H1 (cell line): ENCODE measurements at regions of chr17 and their contacts with region 1.

Region 1: DNA sequence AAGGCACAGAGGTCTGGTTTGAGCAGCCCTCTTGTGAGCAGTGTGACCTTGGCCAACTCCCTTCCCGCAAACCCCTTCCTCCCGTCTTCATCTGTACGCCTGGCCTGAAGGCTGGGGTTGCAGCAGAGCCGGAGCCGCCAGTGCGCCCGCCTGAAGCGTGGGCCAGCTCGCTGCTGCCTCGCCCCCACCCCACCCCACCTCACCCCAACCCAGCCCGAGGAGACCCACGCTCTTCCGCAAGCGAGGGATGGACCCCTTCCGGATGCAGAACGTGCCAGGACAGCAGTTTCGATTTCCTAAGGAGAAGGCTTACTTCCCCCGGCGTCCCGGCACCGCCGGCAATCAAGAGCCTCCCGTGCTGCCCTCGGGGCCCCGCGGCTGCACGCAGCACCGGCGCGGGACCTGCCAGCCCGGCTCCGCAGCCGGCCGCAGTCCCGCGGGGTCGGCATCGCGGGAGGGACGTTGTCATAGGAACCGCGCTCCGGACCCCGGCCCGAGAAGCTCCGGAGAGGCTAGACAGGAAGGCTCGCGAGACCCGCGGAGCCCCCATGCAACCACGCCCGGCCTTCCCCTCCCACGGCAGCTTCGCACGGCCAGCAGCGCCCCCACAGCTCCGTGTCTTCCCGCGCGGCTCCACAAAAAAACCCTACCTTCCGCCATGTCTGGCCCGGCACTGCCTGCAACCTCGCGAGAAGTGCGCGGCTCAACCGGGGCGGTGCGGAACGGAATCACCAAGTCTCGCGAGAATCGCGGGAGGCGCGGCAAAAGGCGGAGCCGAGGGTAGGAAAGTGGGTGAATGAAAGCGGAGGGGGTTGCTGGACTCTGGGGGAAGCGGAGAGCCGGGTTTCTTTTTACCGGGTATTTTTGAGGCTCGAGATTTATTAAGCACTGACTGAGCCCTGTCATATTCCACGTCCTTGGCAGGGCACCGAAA is at the start of gene ANKFY1:
- DNase-seq: peak; percentile 79 to 99
- H3K4me3 ChIP-seq: peak within 1 kb of the TSS; percentile 65 to 99 (median 82)
- H3K27ac ChIP-seq: peak within 1 kb of the TSS; percentile 92
- H3K4me1 ChIP-seq: peaks cover 0 to 14% (median 5%) of the 10 kb centered on the region in 4 experiments
- H3K27me3 ChIP-seq: no peaks in the 10 kb centered on the region
- CTCF ChIP-seq: no peak
- EP300 ChIP-seq: no peak
- POLR2A ChIP-seq: peak; percentile 65 to 91
- RAD21 ChIP-seq: no peak
- total RNA-seq, gene ANKFY1: 44.9 and 45.3 TPM in 2 replicates

Region 2: GRCh38 chr17:4249452-4250029 is 14.0 kb before region 1 on chr17:
- CTCF ChIA-PET with region 1: interaction called, 89 read pairs
- POLR2A ChIA-PET with region 1: interaction called, 12 read pairs
- DNase-seq: no peak
- H3K4me3 ChIP-seq: no peak overlapping the region
- H3K27ac ChIP-seq: no peak overlapping the region
- H3K4me1 ChIP-seq: peaks cover 0 to 15% (median 10%) of the 10 kb centered on the region in 4 experiments; a peak in 5 of 7 replicates
- H3K27me3 ChIP-seq: no peaks in the 10 kb centered on the region
- CTCF ChIP-seq: peak in 2 of 3 experiments; percentile 52 to 59; a peak in 3 of 4 replicates
- EP300 ChIP-seq: no peak
- POLR2A ChIP-seq: no peak
- RAD21 ChIP-seq: peak; percentile 8 to 31; a peak in 1 of 4 replicates

Region 3: DNA sequence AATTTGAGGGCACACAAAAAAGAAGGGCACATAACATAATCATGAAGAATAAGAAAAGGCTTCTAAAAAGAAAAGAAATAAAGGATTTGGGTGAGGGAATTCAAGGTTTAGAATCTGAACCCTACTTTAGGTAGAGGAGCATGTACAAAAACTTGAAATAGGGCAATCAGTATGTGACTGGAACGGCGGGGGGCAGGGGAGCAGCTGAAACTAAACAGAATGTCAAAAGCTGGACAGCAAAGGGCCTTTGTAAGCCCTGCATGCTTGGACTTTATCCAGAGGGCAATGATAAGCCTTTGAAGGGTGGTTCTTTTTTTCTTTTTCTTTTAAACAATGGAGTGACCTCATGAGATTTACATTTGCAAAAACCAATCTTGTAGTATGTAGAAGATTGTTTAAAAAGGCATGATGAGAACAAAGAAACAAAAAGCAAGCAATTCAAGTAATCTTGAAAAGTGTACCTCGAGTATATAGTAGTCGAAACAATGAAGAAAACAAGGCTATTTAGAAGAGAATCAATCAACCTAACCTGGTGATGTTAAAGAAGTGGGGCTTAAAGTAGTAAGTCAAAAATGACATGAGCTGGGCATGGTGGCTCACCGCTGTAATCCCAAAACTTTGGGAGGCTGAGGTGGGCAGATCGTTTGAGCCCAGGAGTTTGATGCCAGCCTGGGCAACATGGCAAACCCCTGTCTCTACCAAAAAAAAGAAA is 47.0 kb after region 1 on chr17:
- CTCF ChIA-PET with region 1: no interaction called
- POLR2A ChIA-PET with region 1: no interaction called
- DNase-seq: no peak
- H3K4me3 ChIP-seq: no peak overlapping the region
- H3K27ac ChIP-seq: no peak overlapping the region
- H3K4me1 ChIP-seq: peaks cover 2 to 20% (median 5%) of the 10 kb centered on the region in 4 experiments; a peak in 5 of 7 replicates
- H3K27me3 ChIP-seq: no peaks in the 10 kb centered on the region
- CTCF ChIP-seq: no peak
- EP300 ChIP-seq: no peak
- POLR2A ChIP-seq: no peak
- RAD21 ChIP-seq: no peak